Panc1 (cell line): ENCODE measurements at regions of chr3 and their contacts with region 1.

Region 1: DNA sequence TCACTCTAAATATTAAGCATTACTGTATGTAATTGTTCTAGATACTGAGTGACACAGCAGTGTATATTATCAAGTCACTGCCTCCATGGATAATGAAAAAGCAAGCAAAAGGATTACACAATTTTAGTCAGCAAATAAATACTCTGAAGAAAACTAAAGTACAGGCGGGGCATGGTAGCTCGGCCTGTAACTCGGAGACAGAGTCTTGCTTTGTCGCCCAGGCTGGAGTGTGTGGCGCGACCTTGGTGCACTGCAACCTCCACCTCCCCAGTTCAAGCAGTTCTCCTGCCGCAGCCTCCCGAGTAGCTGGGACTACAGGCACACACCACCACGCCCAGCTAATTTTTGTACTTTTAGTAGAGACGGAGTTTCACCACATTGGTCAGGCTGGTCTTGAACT is 32.7 kb downstream of the RBM6 start:
- DNase-seq: no peak
- ATAC-seq: no peak
- H3K4me3 ChIP-seq: no peak overlapping the region
- H3K27ac ChIP-seq: no peak overlapping the region
- H3K4me1 ChIP-seq: no peaks in the 10 kb centered on the region
- H3K27me3 ChIP-seq: no peaks in the 10 kb centered on the region
- CTCF ChIP-seq: no peak

Region 2: DNA sequence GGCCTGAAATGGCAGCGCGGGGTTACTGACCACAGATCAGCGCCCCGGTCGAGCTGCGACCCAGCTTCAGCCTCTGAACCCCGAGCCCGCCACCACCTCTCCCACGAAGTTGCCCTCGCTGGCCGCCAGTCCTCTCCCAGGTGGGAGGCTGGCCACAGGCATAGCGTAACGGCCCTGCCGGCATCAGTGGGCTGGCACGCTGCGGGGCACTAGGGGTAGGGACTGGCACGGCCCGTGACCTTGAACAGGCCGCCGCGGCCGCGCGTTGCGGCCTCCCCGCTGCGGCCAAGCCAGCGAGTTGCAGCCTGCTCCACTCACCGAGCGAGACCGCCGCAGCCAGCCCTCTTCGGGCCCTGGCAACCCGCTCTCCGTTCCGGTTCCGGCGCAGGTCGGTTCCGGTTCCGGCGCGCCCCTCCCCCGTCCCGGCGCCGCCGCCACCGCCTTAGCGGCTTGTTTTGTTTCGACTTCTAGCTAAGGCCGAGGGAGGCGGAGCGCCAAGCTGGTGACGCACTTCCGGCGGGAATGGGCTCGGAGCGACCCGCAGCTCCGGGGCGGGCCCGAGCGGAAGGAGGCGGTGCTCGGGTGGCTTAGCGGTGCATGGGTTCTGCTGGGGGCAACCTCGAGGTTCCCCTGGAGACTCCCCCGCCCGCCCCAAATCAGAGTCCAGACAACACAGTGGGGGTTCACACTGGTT is 852.1 kb before region 1 on chr3 and contains the start of gene USP19:
- CTCF ChIA-PET with region 1: no interaction called
- POLR2A ChIA-PET with region 1: no interaction called
- in situ Hi-C with region 1: no loop called
- intact Hi-C with region 1: no loop called
- DNase-seq: no peak
- ATAC-seq: peak; percentile 95
- H3K4me3 ChIP-seq: peak within 1 kb of the TSS; percentile 83 to 85
- H3K27ac ChIP-seq: peak within 1 kb of the TSS; percentile 92
- H3K4me1 ChIP-seq: peaks cover 8% of the 10 kb centered on the region
- H3K27me3 ChIP-seq: no peaks in the 10 kb centered on the region
- CTCF ChIP-seq: no peak
- total RNA-seq, gene USP19: 60.6 TPM

Region 3: GRCh38 chr3:49955636-49956035 is 17.0 kb before region 1 on chr3:
- CTCF ChIA-PET with region 1: no interaction called
- POLR2A ChIA-PET with region 1: interaction called, 11 read pairs
- in situ Hi-C with region 1: no loop called
- intact Hi-C with region 1: no loop called
- DNase-seq: no peak
- ATAC-seq: no peak
- H3K4me3 ChIP-seq: no peak overlapping the region
- H3K27ac ChIP-seq: no peak overlapping the region
- H3K4me1 ChIP-seq: peaks cover 4% of the 10 kb centered on the region; the same call in 1 of the 2 replicates
- H3K27me3 ChIP-seq: no peaks in the 10 kb centered on the region
- CTCF ChIP-seq: no peak